Activated CD8-positive, alpha-beta T cell treated with anti-CD3 and anti-CD28 coated beads for 36 hours (primary cell): ENCODE measurements at regions of chr11 and their contacts with region 1.

Region 1: DNA sequence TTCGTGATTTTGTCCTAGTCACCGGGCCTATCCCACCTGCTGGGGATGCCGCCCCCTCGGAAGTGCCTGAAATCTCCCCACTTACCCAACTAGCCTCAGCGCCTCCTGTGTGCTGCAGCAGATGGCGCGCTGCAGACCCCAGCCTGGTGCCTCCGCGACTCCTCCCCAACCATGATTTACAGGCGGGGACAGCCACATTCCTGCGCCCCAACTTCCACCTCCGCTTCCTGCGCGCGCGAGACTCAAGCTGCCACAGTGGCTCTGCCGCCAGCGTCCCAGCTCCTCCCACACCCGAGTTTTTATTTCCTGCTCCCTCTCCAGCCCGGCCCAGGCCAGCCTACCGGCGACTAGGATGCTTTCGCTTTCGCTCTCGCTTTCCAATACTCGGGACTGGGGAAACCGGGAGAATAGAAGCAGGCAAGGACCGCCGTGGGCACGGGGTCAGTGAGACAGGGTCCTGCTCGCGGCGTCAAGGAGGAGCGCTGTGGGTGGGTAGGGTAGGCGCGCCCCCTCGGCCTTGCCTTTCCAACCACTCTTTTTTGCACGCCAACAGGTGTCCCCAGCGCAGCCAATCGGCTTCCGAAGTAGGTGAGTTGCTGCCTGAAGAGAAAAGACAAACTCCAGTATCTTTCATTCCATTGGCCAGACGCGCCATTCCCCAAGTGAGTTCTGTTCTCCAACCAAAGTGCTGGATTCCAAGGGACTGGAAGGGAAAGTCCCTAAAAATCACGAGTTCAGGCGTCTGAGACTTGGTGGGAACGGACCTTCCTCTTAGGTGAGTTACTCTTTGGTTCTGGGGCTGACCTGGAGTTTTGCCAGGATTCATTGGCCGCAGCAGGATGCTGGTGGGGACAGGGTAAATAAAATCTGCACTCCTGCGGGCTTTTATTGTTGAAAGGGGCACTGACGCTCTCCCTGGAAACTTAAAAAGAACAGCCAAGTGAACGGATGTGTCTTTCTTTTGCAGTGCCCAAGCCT is at the start of gene FAM111A:
- DNase-seq: peak; percentile 87
- ATAC-seq: peak; percentile 79
- H3K4me3 Mint-ChIP-seq: peak within 1 kb of the TSS; percentile 93
- H3K27ac Mint-ChIP-seq: peak within 1 kb of the TSS; percentile 93
- H3K4me1 Mint-ChIP-seq: peaks cover 47% of the 10 kb centered on the region
- H3K27me3 Mint-ChIP-seq: no peaks in the 10 kb centered on the region
- CTCF ChIP-seq: no peak
- total RNA-seq, gene FAM111A: 71.8 to 74.5 TPM

Region 2: GRCh38 chr11:59106363-59107336 is 36.2 kb before region 1 on chr11 and contains the start of gene FAM111B:
- CTCF ChIA-PET with region 1: interaction called, 10 read pairs
- POLR2A ChIA-PET with region 1: interaction called, 13 read pairs
- intact Hi-C with region 1: loop called (anchors 5 kb)
- DNase-seq: peak; percentile 84
- ATAC-seq: peak; percentile 89
- H3K4me3 Mint-ChIP-seq: peak within 1 kb of the TSS; percentile 86
- H3K27ac Mint-ChIP-seq: peak within 1 kb of the TSS; percentile 65
- H3K4me1 Mint-ChIP-seq: peaks cover 30% of the 10 kb centered on the region
- H3K27me3 Mint-ChIP-seq: peaks cover 48% of the 10 kb centered on the region
- CTCF ChIP-seq: no peak
- total RNA-seq, gene FAM111B: 18.2 to 18.3 TPM